ENCODE measurements at regions of chr17 and their contacts with region 1.

Region 1: GRCh38 chr17:3723556-3724369 is at the start of gene HASPIN:
- DNase-seq: peak; percentile 94
- ATAC-seq: peak; percentile 94
- H3K4me3 Mint-ChIP-seq: peak within 1 kb of the TSS; percentile 92
- H3K27ac Mint-ChIP-seq: peak within 1 kb of the TSS; percentile 90
- H3K4me1 Mint-ChIP-seq: peaks cover 63% of the 10 kb centered on the region
- H3K27me3 Mint-ChIP-seq: no peaks in the 10 kb centered on the region
- total RNA-seq, gene HASPIN: 27.0 to 28.1 TPM

Region 2: DNA sequence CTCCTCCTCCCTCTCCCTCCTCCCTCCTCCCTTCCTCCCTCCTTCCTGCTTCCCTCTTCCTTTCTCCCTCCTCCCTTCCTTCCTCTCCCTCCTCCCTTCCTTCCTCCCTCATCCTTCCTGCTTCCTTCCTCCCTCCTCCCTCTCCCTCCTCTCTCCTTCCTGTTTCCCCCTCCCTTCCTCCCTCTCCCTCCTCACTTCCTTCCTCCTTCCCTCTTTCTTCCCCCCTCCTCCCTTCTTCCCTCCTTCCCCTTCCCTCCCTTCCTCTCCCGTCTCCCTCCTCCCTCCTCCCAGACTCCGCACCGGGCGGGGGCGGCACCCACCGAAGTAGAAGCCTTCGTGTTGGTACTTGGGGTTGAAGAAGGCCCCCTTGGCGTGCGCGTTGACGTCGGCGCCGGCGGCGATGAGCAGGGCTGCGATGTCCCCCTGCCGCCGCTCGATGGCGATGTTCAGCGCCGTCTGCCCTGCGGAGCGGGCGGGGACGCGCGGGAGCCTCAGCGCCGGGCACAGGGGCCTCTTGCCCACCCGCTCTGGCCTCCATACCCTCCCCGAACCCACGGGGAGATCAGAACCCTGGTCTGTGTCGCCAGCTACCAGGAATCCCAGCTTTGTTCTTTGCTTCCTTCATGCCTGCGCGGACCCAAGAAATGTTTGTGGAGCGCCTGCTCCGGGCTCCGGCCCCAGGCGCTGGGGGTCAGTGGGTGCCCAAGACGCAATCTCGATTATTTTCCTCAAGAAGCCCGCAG is 188.3 kb before region 1 on chr17:
- CTCF ChIA-PET with region 1: no interaction called
- POLR2A ChIA-PET with region 1: no interaction called
- DNase-seq: peak; percentile 70
- ATAC-seq: peak; percentile 79
- H3K4me3 Mint-ChIP-seq: peak overlapping the region; percentile 38
- H3K27ac Mint-ChIP-seq: peak overlapping the region; percentile 39
- H3K4me1 Mint-ChIP-seq: peaks cover 12% of the 10 kb centered on the region
- H3K27me3 Mint-ChIP-seq: peaks cover 8% of the 10 kb centered on the region

Region 3: GRCh38 chr17:3683054-3683511 is 40.7 kb before region 1 on chr17:
- CTCF ChIA-PET with region 1: interaction called, 29 read pairs
- POLR2A ChIA-PET with region 1: interaction called, 3 read pairs
- DNase-seq: peak; percentile 74
- ATAC-seq: peak; percentile 90
- H3K4me3 Mint-ChIP-seq: no peak overlapping the region
- H3K27ac Mint-ChIP-seq: no peak overlapping the region
- H3K4me1 Mint-ChIP-seq: peaks cover 25% of the 10 kb centered on the region
- H3K27me3 Mint-ChIP-seq: no peaks in the 10 kb centered on the region

Region 4: DNA sequence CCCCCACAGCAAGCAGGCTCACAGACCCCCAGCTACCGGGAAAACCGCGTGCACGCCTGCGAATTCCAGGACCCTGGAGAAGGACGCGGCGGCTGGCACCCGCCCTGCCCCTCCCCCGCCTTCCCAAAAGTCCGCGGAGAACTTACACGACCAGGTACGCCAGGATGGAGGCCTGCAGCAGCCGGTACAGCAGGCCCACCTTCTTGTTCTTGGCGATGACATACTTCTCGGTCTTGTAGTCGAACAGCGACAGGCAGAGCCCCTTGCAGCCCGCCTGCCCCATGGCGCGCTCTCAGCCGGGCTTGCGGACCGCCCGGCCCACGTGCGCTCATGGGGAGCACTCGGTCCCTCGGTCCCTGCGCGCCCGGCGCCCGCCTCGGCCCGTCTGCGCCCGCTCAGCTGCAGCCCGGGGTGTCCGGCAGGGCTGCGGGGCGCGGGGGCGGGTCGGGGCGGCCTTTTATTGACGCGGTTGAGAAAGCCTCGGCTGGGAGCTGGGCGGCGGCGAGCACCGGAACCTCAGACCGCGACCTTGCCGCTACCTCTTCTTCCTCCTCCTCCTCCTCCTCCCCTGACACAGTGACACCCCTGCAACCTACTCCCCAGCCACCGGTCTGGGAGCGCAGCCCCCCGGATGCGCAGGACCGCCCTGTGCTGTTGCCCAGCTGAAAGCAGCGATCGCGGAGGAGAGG is 27.9 kb before region 1 on chr17 and contains the start of gene P2RX5:
- CTCF ChIA-PET with region 1: interaction called, 11 read pairs
- POLR2A ChIA-PET with region 1: interaction called, 18 read pairs
- DNase-seq: peak; percentile 71
- ATAC-seq: peak; percentile 78
- H3K4me3 Mint-ChIP-seq: peak within 1 kb of the TSS; percentile 86
- H3K27ac Mint-ChIP-seq: peak within 1 kb of the TSS; percentile 87
- H3K4me1 Mint-ChIP-seq: peaks cover 37% of the 10 kb centered on the region
- H3K27me3 Mint-ChIP-seq: no peaks in the 10 kb centered on the region
- total RNA-seq, gene P2RX5: 7.8 to 8.1 TPM

Region 5: DNA sequence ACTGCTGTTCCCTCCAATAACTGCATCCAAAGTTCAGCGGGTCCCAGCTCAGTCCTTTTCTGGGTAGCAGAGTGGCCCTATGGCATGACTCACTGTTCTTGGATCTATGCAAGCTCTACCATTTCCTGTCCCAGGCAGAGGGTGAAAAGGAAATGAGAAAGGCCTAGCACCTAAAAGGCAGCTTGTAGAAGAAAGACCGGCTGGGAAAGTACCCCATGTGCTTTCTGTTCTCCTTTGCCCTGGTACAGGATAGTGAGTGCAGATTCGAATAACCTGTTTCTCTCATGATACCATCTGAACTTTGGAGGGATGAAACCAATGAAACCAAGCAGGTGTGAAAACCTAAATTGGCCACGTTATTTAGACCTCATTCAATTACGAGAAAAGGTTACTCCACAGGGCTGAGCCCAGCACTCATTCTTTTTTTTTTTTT is 12.8 kb before region 1 on chr17:
- CTCF ChIA-PET with region 1: interaction called, 8 read pairs
- POLR2A ChIA-PET with region 1: interaction called, 18 read pairs
- DNase-seq: peak; percentile 87
- ATAC-seq: peak; percentile 99
- H3K4me3 Mint-ChIP-seq: peak overlapping the region; percentile 37
- H3K27ac Mint-ChIP-seq: peak overlapping the region; percentile 85
- H3K4me1 Mint-ChIP-seq: peaks cover 53% of the 10 kb centered on the region
- H3K27me3 Mint-ChIP-seq: no peaks in the 10 kb centered on the region